AG04450 (cell line): ENCODE measurements at regions of chr2 and their contacts with region 1.

Region 1: GRCh38 chr2:227818675-227819397 is 5.2 kb downstream of the CCL20 start:
- DNase-seq: no peak
- H3K4me3 ChIP-seq: peak overlapping the region; percentile 12; the same call in 1 of the 2 replicates
- H3K27ac ChIP-seq: peak overlapping the region; percentile 78
- H3K27me3 ChIP-seq: no peaks in the 10 kb centered on the region
- CTCF ChIP-seq: no peak

Region 2: GRCh38 chr2:227728035-227728434 is 90.8 kb before region 1 on chr2 and contains the start of gene SCYGR7:
- CTCF ChIA-PET with region 1: no interaction called
- POLR2A ChIA-PET with region 1: no interaction called
- DNase-seq: no peak
- H3K4me3 ChIP-seq: no peak within 1 kb of the TSS
- H3K27ac ChIP-seq: no peak within 1 kb of the TSS
- H3K27me3 ChIP-seq: peaks cover 2% of the 10 kb centered on the region
- CTCF ChIP-seq: no peak
- polyA plus RNA-seq, gene SCYGR7: not detected in 2 replicates

Region 3: GRCh38 chr2:227834423-227834822 is 15.6 kb after region 1 on chr2:
- CTCF ChIA-PET with region 1: no interaction called
- POLR2A ChIA-PET with region 1: no interaction called
- DNase-seq: no peak
- H3K4me3 ChIP-seq: no peak overlapping the region
- H3K27ac ChIP-seq: no peak overlapping the region
- H3K27me3 ChIP-seq: no peaks in the 10 kb centered on the region
- CTCF ChIP-seq: no peak

Region 4: DNA sequence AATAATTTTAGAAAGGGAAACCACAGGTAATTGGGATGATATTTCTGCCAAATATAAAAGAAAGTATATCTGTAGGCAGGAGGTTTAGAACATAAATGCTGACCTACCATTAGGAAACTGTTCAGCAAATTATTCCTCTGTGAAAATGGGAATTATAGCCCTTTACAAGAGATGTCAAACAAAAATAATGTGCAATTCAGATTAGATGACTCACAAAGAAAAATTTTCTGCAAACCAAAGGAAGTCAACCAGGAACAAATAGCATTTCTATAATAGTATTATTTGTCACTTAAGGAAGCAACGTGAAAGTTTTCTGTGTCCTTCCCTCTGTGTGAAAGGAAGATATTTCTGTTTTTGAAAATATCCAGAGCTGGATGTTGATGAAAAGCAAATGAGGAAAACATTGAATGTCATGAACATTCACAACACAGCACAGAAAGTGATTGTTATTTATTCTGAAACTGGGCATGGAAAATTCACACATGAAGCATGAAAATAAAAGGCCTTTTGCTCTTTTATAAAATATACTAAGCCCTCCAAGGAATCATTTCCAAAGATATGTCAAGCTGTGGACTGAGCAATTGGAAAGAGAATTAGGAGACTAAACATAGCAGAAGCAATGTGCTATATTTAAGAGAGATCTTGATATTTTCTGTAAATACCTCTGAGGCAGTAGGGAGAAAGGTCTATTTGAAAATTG is 420.5 kb after region 1 on chr2:
- CTCF ChIA-PET with region 1: no interaction called
- POLR2A ChIA-PET with region 1: no interaction called
- DNase-seq: no peak
- H3K4me3 ChIP-seq: no peak overlapping the region
- H3K27ac ChIP-seq: no peak overlapping the region
- H3K27me3 ChIP-seq: no peaks in the 10 kb centered on the region
- CTCF ChIP-seq: no peak

Region 5: GRCh38 chr2:228673876-228674554 is 855.2 kb after region 1 on chr2:
- CTCF ChIA-PET with region 1: no interaction called
- POLR2A ChIA-PET with region 1: interaction called, 10 read pairs
- DNase-seq: no peak
- H3K4me3 ChIP-seq: no peak overlapping the region
- H3K27ac ChIP-seq: no peak overlapping the region
- H3K27me3 ChIP-seq: no peaks in the 10 kb centered on the region
- CTCF ChIP-seq: no peak